ENCODE measurements at regions of chr2 and their contacts with region 1.

Region 1: GRCh38 chr2:85132834-85133637 is at the start of gene TCF7L1:
- DNase-seq: peak; percentile 35
- H3K4me3 ChIP-seq: peak within 1 kb of the TSS; percentile 69
- H3K27me3 ChIP-seq: no peaks in the 10 kb centered on the region; the same call in 1 of the 2 replicates
- CTCF ChIP-seq: peak; percentile 96
- polyA plus RNA-seq, gene TCF7L1: 1.9 and 3.2 TPM in 2 replicates

Region 2: DNA sequence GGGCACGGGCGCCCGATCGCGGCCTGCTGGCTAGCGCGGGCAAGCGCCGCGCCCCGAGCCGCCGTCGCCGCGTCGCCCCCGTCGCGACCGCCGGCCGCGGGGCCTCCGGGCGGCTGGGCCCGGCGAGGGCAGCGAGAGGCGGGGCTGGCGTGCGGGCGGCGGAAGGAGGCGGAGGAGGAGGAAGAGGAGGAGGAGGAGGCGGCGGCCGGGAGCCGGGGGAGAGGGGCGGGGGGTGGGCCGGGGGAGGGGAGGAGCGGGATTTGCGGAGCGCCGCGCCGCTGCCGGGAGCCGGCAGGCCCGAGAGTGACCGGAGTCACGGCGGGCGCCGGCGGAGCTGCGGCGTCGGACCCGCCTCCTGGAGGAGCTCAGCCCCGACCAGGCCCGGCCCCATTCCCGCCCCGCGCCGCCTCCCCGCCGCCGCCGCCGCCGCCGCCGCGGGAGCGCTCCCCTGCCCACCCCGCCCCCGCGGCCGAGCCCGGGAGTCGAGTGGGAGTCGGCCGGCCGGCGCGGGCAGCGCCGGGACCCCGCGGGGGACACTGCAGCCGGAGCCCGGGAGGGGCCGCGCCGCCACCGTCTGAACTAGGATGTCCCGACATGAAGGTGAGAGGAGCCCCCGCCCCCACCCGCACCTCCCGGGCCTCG is 162.0 kb before region 1 on chr2 and contains the start of gene KCMF1:
- CTCF ChIA-PET with region 1: no interaction called
- POLR2A ChIA-PET with region 1: no interaction called
- DNase-seq: no peak
- H3K4me3 ChIP-seq: peak within 1 kb of the TSS; percentile 53
- H3K27me3 ChIP-seq: no peaks in the 10 kb centered on the region
- CTCF ChIP-seq: no peak
- polyA plus RNA-seq, gene KCMF1: 83.3 and 146 TPM in 2 replicates

Region 3: GRCh38 chr2:85111819-85112281 is 21.2 kb before region 1 on chr2:
- CTCF ChIA-PET with region 1: interaction called, 10 read pairs
- POLR2A ChIA-PET with region 1: no interaction called
- DNase-seq: no peak
- H3K4me3 ChIP-seq: no peak overlapping the region
- H3K27me3 ChIP-seq: no peaks in the 10 kb centered on the region
- CTCF ChIP-seq: no peak

Region 4: DNA sequence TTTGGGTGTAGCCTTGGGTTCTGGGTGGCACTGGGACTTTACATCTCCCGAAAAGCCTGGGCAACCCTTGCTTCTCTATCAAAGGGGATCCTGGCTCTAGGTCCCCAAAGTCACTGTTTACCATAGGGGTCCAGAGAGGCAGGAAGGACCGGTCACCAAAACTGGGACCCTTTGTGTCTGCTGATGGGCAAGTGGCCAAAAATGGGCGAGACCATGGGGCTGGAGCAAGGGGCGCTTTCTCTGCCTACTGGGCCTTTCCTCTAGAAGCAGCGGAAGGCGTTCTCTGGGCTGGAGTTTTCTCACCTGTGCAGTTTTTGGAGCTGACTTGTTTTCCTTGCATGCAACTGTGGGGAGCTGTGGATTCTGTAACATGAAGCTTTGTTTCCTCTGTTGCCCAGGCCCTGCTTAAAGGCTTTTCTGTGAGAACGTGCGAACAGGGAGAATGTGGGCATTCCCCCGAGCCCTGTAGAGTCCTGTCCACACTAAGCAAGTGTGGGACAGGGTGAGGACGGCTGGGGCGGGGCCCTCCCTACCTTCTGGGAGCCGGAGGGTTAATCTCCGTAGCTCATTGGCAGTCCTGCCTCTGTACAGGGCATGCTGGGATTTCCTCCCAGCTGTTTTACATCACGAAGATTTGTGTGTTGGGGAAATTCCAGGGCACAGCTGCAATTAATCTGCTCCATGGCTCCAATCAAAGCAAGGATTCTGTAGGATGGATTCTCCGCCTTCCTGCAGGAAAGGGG is 144.6 kb after region 1 on chr2:
- CTCF ChIA-PET with region 1: interaction called, 115 read pairs
- POLR2A ChIA-PET with region 1: no interaction called
- DNase-seq: peak; percentile 77
- H3K4me3 ChIP-seq: no peak overlapping the region
- H3K27me3 ChIP-seq: no peaks in the 10 kb centered on the region
- CTCF ChIP-seq: no peak